B cell (primary cell): ENCODE measurements at regions of chr16 and their contacts with region 1.

Region 1: DNA sequence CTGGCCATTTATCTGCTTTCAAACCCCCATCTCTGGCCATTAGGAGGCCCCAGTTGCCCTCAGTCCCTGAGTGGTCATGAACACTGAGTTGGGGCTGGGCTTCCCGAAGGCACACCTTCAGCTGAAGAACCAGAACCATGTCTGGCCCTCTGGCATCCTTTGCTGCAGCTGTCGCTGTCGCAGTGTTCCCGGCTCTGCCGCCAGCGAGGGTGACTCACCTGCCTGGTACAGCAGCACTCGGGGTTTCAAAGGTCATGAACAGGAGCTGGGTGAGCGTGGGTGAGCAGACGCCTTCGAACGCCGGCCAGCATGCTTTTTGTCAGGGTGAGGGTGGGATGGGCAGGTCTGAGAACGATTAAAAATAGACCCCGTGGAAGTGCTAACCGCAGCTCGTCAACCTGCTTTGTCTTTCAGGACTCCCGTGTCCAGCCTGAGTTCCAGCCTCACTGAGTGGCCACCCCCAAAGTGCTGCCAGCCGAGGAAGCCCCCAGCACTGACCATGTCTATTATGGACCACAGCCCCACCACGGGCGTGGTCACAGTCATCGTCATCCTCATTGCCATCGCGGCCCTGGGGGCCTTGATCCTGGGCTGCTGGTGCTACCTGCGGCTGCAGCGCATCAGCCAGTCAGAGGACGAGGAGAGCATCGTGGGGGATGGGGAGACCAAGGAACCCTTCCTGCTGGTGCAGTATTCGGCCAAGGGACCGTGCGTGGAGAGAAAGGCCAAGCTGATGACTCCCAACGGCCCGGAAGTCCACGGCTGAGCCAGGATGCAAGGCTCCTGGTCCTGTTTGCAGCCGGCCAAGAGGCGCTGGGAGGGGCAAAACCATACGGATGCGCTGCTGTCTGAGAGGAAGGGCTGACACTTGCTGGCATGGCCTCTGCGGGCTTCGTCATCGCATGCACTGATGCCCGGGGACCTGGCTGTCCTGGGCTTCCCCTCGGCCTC is 7.6 kb downstream of the SNN start:
- DNase-seq: no peak
- ATAC-seq: no peak
- H3K4me3 ChIP-seq: no peak overlapping the region
- H3K4me3 Mint-ChIP-seq: peak overlapping the region; percentile 87
- H3K27ac ChIP-seq: peak overlapping the region; percentile 62 to 99
- H3K27ac Mint-ChIP-seq: peak overlapping the region; percentile 32
- H3K4me1 ChIP-seq: peaks cover 93 to 100% of the 10 kb centered on the region in 2 donors
- H3K4me1 Mint-ChIP-seq: peaks cover 98% of the 10 kb centered on the region
- H3K27me3 ChIP-seq: no peaks in the 10 kb centered on the region
- H3K27me3 Mint-ChIP-seq: no peaks in the 10 kb centered on the region
- CTCF ChIP-seq: no peak

Region 2: GRCh38 chr16:11632464-11632939 is 43.3 kb before region 1 on chr16:
- CTCF ChIA-PET with region 1: no interaction called
- POLR2A ChIA-PET with region 1: interaction called, 10 read pairs
- intact Hi-C with region 1: no loop called
- DNase-seq: no peak
- ATAC-seq: no peak
- H3K4me3 ChIP-seq: no peak overlapping the region
- H3K4me3 Mint-ChIP-seq: no peak overlapping the region
- H3K27ac ChIP-seq: no peak overlapping the region
- H3K27ac Mint-ChIP-seq: no peak overlapping the region
- H3K4me1 ChIP-seq: peaks cover 22 to 41% of the 10 kb centered on the region in 2 donors
- H3K4me1 Mint-ChIP-seq: peaks cover 33% of the 10 kb centered on the region
- H3K27me3 ChIP-seq: no peaks in the 10 kb centered on the region
- H3K27me3 Mint-ChIP-seq: no peaks in the 10 kb centered on the region
- CTCF ChIP-seq: no peak

Region 3: GRCh38 chr16:11651796-11652195 is 24.0 kb before region 1 on chr16:
- CTCF ChIA-PET with region 1: no interaction called
- POLR2A ChIA-PET with region 1: interaction called, 12 read pairs
- intact Hi-C with region 1: no loop called
- DNase-seq: no peak
- ATAC-seq: peak; percentile 28
- H3K4me3 ChIP-seq: no peak overlapping the region
- H3K4me3 Mint-ChIP-seq: no peak overlapping the region
- H3K27ac ChIP-seq: no peak overlapping the region
- H3K27ac Mint-ChIP-seq: no peak overlapping the region
- H3K4me1 ChIP-seq: no peaks in the 10 kb centered on the region
- H3K4me1 Mint-ChIP-seq: peaks cover 11% of the 10 kb centered on the region
- H3K27me3 ChIP-seq: no peaks in the 10 kb centered on the region
- H3K27me3 Mint-ChIP-seq: no peaks in the 10 kb centered on the region
- CTCF ChIP-seq: no peak

Region 4: GRCh38 chr16:11783319-11784037 is 107.6 kb after region 1 on chr16:
- CTCF ChIA-PET with region 1: no interaction called
- POLR2A ChIA-PET with region 1: no interaction called
- intact Hi-C with region 1: no loop called
- DNase-seq: peak; percentile 86
- ATAC-seq: peak; percentile 75
- H3K4me3 ChIP-seq: peak overlapping the region in 4 of 5 experiments; percentile 22 to 57 (median 37)
- H3K4me3 Mint-ChIP-seq: peak overlapping the region; percentile 93
- H3K27ac ChIP-seq: peak overlapping the region; percentile 98
- H3K27ac Mint-ChIP-seq: peak overlapping the region; percentile 98
- H3K4me1 ChIP-seq: peaks cover 31 to 41% of the 10 kb centered on the region in 2 donors
- H3K4me1 Mint-ChIP-seq: peaks cover 55% of the 10 kb centered on the region
- H3K27me3 ChIP-seq: no peaks in the 10 kb centered on the region
- H3K27me3 Mint-ChIP-seq: no peaks in the 10 kb centered on the region
- CTCF ChIP-seq: no peak